ENCODE measurements at regions of chr4 and their contacts with region 1.

Region 1: GRCh38 chr4:153127760-153128494 is 76.3 kb upstream of the TRIM2 start:
- DNase-seq: peak; percentile 90
- H3K4me3 Mint-ChIP-seq: no peak overlapping the region
- H3K27ac Mint-ChIP-seq: no peak overlapping the region
- H3K4me1 Mint-ChIP-seq: peaks cover 6% of the 10 kb centered on the region
- H3K27me3 Mint-ChIP-seq: peaks cover 26% of the 10 kb centered on the region

Region 2: DNA sequence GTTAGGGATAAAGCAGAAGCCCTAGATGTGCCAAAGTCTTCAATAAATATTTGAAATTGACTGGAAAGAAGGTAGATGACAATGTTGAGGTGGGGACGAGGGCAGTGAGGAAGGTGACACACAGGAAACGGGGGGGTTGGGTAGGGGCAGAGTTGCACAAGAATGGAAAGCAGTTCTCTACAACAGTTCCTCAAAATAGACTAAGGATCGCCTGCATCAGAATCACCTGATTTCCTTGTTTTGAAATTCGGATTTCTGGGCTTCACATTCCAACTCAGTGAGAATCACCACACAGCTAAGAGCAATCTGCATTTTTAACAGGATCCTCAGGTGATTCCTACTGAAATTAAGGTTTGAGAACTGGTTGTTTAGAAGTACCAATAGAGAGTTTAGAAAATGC is 277.6 kb before region 1 on chr4:
- CTCF ChIA-PET with region 1: interaction called, 57 read pairs
- DNase-seq: peak; percentile 55
- H3K4me3 Mint-ChIP-seq: no peak overlapping the region
- H3K27ac Mint-ChIP-seq: no peak overlapping the region
- H3K4me1 Mint-ChIP-seq: peaks cover 20% of the 10 kb centered on the region
- H3K27me3 Mint-ChIP-seq: no peaks in the 10 kb centered on the region

Region 3: DNA sequence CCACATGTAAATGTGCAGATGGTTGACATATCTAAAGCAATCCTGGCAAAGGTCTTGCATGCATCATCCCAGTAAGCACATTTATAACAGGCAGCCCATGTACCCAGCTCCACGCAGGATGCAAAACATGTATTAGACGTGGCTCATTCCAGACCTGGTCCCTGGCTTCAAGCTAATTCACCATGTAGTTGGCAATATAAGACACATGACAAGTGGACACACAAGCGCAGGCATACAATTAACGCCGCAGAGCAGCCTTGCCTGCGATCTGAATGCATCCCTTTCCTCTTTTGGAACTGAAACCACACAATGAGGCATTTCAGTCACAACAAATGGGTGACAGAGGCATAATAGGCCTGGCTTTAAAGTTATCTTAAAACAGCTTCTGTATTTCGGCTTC is 38.2 kb before region 1 on chr4:
- CTCF ChIA-PET with region 1: interaction called, 239 read pairs
- DNase-seq: no peak
- H3K4me3 Mint-ChIP-seq: no peak overlapping the region
- H3K27ac Mint-ChIP-seq: no peak overlapping the region
- H3K4me1 Mint-ChIP-seq: peaks cover 16% of the 10 kb centered on the region
- H3K27me3 Mint-ChIP-seq: peaks cover 23% of the 10 kb centered on the region

Region 4: GRCh38 chr4:153115322-153116290 is 12.3 kb before region 1 on chr4:
- CTCF ChIA-PET with region 1: interaction called, 41 read pairs
- DNase-seq: peak; percentile 86
- H3K4me3 Mint-ChIP-seq: peak overlapping the region; percentile 49
- H3K27ac Mint-ChIP-seq: no peak overlapping the region
- H3K4me1 Mint-ChIP-seq: peaks cover 2% of the 10 kb centered on the region
- H3K27me3 Mint-ChIP-seq: peaks cover 5% of the 10 kb centered on the region

Measured in activated naive CD4-positive, alpha-beta T cell treated with anti-CD3 and anti-CD28 coated beads, Interleukin-2, amount 10 ng/mL, durations not matched to agents 7 days and 5 days (primary cell).